Ovary (tissue), 10 donors: ENCODE measurements at regions of chr5 and their contacts with region 1.

Region 1: GRCh38 chr5:157328277-157328912 is 62.5 kb downstream of the CYFIP2 start:
- DNase-seq: peak; percentile 55 to 69 (median 61)
- H3K4me3 ChIP-seq: peak overlapping the region; percentile 2
- H3K27ac ChIP-seq: no peak overlapping the region
- H3K4me1 ChIP-seq: peaks cover 2% of the 10 kb centered on the region
- H3K27me3 ChIP-seq: no peaks in the 10 kb centered on the region
- CTCF ChIP-seq: peak; percentile 74 to 95 (median 74)
- EP300 ChIP-seq: no peak
- POLR2A ChIP-seq: no peak

Region 2: GRCh38 chr5:157290981-157291711 is 37.2 kb before region 1 on chr5:
- intact Hi-C with region 1: no loop called
- DNase-seq: no peak
- H3K4me3 ChIP-seq: no peak overlapping the region
- H3K27ac ChIP-seq: no peak overlapping the region
- H3K4me1 ChIP-seq: no peaks in the 10 kb centered on the region
- H3K27me3 ChIP-seq: no peaks in the 10 kb centered on the region
- CTCF ChIP-seq: no peak
- EP300 ChIP-seq: no peak
- POLR2A ChIP-seq: no peak

Region 3: DNA sequence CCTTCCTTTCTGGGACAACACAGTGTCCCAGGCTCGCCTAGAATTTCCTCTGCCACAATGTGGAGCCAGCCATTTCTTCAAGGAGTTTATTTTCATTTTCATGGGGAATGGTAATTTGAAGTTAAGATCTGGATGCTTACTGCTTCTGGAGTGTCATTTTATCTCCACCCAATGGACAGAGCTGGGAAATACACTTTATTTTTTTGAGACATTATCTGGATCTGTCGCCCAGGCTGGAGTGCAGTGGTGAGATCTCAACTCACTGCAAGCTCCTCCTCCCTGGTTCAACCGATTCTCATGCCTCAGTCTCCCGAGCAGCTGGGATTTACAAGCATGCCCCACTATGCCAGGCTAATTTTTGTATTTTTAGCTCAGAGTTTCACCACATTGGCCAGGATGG is 390.1 kb after region 1 on chr5:
- intact Hi-C with region 1: loop called in 3 of 4 experiments (anchors 2 to 10 kb)
- DNase-seq: peak in 1 of 5 donors; percentile 26
- H3K4me3 ChIP-seq: no peak overlapping the region
- H3K27ac ChIP-seq: no peak overlapping the region
- H3K4me1 ChIP-seq: peaks cover 3% of the 10 kb centered on the region
- H3K27me3 ChIP-seq: no peaks in the 10 kb centered on the region
- CTCF ChIP-seq: peak in 2 of 3 donors; percentile 63 to 67
- EP300 ChIP-seq: no peak
- POLR2A ChIP-seq: no peak

Region 4: DNA sequence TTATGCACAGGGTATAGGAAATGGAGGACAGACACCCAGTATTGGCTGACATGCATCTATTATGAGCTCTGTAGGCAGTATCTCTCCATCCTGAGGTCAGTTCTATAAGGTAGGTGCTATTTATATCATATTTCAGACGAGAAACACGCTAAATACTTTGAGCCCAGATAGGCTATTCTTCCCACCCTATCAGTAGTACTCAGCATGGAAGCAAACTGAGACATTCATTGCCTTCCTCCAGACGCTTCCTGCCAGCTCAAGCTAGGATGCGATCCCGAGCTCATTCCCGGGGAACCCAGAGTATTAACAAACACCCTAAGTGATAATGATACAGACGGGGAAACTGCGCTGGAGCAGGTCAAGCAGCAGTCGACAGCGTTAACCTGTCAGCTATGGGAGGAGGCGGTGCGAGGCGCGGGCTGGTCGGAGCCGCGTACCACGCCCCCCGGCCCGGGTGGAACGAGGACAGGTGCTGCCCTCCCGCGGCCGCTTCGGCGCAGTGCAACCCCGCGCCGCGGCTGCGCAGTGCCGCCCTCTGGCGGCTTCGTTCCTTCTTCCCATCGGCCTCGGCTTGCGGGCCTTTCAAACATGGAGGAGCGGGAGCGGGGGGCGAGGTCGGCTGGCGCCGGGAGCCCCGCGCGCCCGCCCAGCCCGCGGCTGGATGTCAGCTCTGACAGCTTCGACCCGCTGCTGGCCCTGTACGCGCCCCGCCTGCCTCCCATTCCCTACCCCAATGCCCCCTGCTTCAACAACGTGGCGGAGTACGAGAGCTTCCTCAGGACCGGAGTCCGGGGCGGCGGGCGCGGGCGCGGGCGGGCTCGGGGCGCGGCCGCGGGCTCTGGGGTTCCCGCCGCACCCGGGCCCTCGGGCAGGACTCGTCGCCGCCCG is 415.0 kb after region 1 on chr5 and contains the start of gene LSM11:
- intact Hi-C with region 1: loop called in 1 of 4 experiments (anchors 10 kb)
- DNase-seq: peak; percentile 81 to 95 (median 87)
- H3K4me3 ChIP-seq: peak within 1 kb of the TSS; percentile 52
- H3K27ac ChIP-seq: peak within 1 kb of the TSS in 1 of 2 donors; percentile 1
- H3K4me1 ChIP-seq: peaks cover 4% of the 10 kb centered on the region
- H3K27me3 ChIP-seq: no peaks in the 10 kb centered on the region
- CTCF ChIP-seq: peak; percentile 97 to 100 (median 99)
- EP300 ChIP-seq: no peak
- POLR2A ChIP-seq: no peak
- total RNA-seq, gene LSM11: 2.4 to 6.0 (median 5.1) TPM